Caco-2 (cell line): ENCODE measurements at regions of chr5 and their contacts with region 1.

Region 1: GRCh38 chr5:119708076-119708790 is 78.9 kb downstream of the FAM170A start:
- DNase-seq: no peak
- H3K4me3 ChIP-seq: no peak overlapping the region
- H3K4me3 Mint-ChIP-seq: no peak overlapping the region
- H3K27ac Mint-ChIP-seq: no peak overlapping the region
- H3K4me1 ChIP-seq: no peaks in the 10 kb centered on the region
- H3K4me1 Mint-ChIP-seq: no peaks in the 10 kb centered on the region
- H3K27me3 ChIP-seq: no peaks in the 10 kb centered on the region; the same call in 1 of the 2 replicates
- H3K27me3 Mint-ChIP-seq: no peaks in the 10 kb centered on the region
- CTCF ChIP-seq: no peak

Region 2: DNA sequence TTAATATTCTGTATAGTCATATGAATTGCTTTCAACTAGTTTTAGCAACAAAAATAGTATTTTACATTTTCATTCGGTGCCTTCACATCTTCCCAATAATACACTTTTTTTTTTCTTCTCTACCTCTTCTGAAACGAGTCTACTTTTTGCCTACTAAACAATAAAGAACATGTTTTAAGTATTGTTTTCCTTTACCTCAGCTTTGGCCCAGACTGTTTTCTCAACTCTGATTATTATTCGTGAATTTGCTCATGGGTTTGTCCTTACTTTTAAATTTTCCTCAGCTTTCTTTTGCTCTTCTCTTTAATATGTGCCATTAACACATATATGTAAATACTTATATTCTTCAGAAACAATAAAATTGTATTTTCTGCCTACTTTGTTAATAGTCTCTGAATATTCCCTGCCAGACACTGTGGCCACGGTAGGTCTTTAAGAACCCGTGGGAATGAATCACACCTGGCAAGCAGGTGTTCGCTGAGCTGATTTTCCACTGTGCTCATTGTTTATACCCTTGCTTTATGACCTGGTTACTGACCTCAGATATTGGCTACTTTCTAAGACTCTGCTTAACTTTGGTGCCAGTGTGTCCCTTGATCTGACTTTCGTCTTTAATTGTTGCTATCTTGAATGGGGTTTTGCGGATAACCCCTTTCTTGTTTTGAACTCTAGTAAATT is 29.7 kb before region 1 on chr5:
- CTCF ChIA-PET with region 1: no interaction called
- POLR2A ChIA-PET with region 1: no interaction called
- intact Hi-C with region 1: no loop called
- DNase-seq: no peak
- H3K4me3 ChIP-seq: no peak overlapping the region
- H3K4me3 Mint-ChIP-seq: no peak overlapping the region
- H3K27ac Mint-ChIP-seq: no peak overlapping the region
- H3K4me1 ChIP-seq: no peaks in the 10 kb centered on the region
- H3K4me1 Mint-ChIP-seq: no peaks in the 10 kb centered on the region
- H3K27me3 ChIP-seq: no peaks in the 10 kb centered on the region
- H3K27me3 Mint-ChIP-seq: peaks cover 6% of the 10 kb centered on the region
- CTCF ChIP-seq: no peak

Region 3: DNA sequence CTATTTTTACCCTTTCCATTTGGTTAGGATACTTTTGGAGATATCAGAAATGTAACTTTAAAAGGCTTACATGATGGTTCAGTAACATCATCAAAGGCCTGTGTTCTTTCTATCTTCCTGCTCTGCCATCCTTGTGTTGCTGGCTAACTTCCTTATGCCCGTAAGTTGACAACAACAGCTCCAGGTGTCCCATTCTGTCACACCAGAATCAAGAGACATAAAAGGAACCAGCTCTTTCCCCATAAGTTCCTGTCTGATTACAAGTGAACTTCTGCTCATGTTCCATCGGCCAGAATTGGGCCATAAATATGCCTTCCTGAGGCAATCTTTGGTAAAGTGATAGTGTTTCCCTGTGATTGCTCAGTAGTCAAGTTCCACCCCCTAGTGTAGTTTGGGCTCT is 13.5 kb after region 1 on chr5:
- CTCF ChIA-PET with region 1: no interaction called
- POLR2A ChIA-PET with region 1: no interaction called
- intact Hi-C with region 1: loop called (anchors 1 kb)
- DNase-seq: no peak
- H3K4me3 ChIP-seq: no peak overlapping the region
- H3K4me3 Mint-ChIP-seq: no peak overlapping the region
- H3K27ac Mint-ChIP-seq: no peak overlapping the region
- H3K4me1 ChIP-seq: no peaks in the 10 kb centered on the region
- H3K4me1 Mint-ChIP-seq: no peaks in the 10 kb centered on the region
- H3K27me3 ChIP-seq: no peaks in the 10 kb centered on the region
- H3K27me3 Mint-ChIP-seq: no peaks in the 10 kb centered on the region
- CTCF ChIP-seq: no peak